Panc1 (cell line): ENCODE measurements at regions of chr2 and their contacts with region 1.

Region 1: GRCh38 chr2:226622484-226622883 is 177.1 kb downstream of the IRS1 start:
- DNase-seq: no peak
- ATAC-seq: peak; percentile 65; the same call in 1 of the 2 replicates
- H3K4me3 ChIP-seq: no peak overlapping the region
- H3K27ac ChIP-seq: no peak overlapping the region
- H3K4me1 ChIP-seq: no peaks in the 10 kb centered on the region
- H3K27me3 ChIP-seq: no peaks in the 10 kb centered on the region
- CTCF ChIP-seq: peak; percentile 21; the same call in 1 of the 2 replicates

Region 2: GRCh38 chr2:226721541-226721940 is 99.1 kb after region 1 on chr2:
- CTCF ChIA-PET with region 1: no interaction called
- POLR2A ChIA-PET with region 1: no interaction called
- in situ Hi-C with region 1: no loop called
- intact Hi-C with region 1: no loop called
- DNase-seq: no peak
- ATAC-seq: no peak
- H3K4me3 ChIP-seq: no peak overlapping the region
- H3K27ac ChIP-seq: no peak overlapping the region
- H3K4me1 ChIP-seq: no peaks in the 10 kb centered on the region
- H3K27me3 ChIP-seq: no peaks in the 10 kb centered on the region
- CTCF ChIP-seq: no peak

Region 3: GRCh38 chr2:226800941-226801784 is 178.7 kb after region 1 on chr2:
- CTCF ChIA-PET with region 1: no interaction called
- POLR2A ChIA-PET with region 1: no interaction called
- in situ Hi-C with region 1: no loop called
- intact Hi-C with region 1: no loop called
- DNase-seq: no peak
- ATAC-seq: peak; percentile 74
- H3K4me3 ChIP-seq: peak overlapping the region; percentile 73
- H3K27ac ChIP-seq: peak overlapping the region; percentile 96
- H3K4me1 ChIP-seq: peaks cover 14% of the 10 kb centered on the region
- H3K27me3 ChIP-seq: no peaks in the 10 kb centered on the region
- CTCF ChIP-seq: no peak

Region 4: DNA sequence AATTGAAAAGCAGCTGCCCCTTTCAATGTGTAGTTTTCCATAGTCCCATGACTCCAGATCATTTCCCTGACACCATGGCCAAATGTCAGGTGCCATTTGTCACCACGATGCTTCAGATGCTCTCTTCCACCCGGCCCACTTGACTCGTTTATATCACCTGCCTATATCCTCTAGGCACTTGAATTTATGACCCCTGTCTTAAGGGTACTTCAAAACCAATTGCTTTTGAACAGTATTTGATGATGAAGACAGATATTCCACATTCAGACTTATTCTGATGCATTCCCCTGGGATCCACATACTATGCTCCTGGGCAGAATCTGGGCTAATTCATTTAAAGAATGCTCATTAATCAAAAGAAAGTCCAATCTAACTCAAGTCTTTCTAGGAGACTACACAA is 196.4 kb after region 1 on chr2:
- CTCF ChIA-PET with region 1: no interaction called
- POLR2A ChIA-PET with region 1: interaction called, 15 read pairs
- in situ Hi-C with region 1: no loop called
- intact Hi-C with region 1: no loop called
- DNase-seq: no peak
- ATAC-seq: no peak
- H3K4me3 ChIP-seq: no peak overlapping the region
- H3K27ac ChIP-seq: no peak overlapping the region
- H3K4me1 ChIP-seq: no peaks in the 10 kb centered on the region
- H3K27me3 ChIP-seq: no peaks in the 10 kb centered on the region
- CTCF ChIP-seq: no peak